Mucosa of descending colon (tissue), 3 donors: ENCODE measurements at regions of chr17 and their contacts with region 1.

Region 1: DNA sequence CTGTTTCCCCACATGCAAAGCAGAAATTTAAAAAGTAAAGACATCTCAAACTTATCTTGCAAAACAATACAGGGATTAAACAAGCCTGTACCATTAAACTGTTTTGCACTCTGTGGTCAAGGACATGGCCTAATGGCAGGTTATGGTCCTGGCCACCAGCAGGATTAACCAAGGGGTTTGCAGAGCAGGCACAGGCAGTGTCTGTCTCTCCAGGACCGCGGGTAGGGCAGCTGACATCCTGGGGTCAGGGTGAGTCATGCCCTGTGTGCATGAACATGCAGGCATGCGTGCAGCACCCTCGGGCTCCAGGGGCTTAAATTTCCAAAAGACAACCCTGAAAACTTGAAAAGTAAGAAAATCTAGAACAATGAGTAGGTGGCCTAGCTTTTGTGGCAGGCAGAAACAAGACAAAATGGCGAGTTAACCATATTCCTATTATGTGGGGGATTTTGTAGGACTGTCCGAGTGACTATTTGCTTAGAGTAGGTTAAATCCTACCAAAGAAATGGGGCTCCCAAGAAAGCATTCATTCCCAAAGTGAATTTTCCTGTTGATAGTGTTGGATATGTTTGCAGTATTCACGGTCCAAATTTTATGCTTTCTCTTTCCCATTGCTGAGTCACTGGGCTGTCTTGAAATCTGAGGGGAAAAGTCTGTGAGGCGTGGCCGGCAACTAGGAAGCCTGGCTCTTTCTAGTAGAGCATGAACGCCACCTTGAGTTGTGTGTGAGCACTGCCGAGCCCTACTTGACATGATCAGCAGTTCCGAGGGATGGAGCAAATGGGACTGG is 158.4 kb upstream of the FAM20A start:
- DNase-seq: peak; percentile 77 to 92 (median 80)
- ATAC-seq: peak; percentile 99
- H3K4me3 ChIP-seq: no peak overlapping the region
- H3K4me1 ChIP-seq: no peaks in the 10 kb centered on the region
- CTCF ChIP-seq: peak; percentile 64

Region 2: DNA sequence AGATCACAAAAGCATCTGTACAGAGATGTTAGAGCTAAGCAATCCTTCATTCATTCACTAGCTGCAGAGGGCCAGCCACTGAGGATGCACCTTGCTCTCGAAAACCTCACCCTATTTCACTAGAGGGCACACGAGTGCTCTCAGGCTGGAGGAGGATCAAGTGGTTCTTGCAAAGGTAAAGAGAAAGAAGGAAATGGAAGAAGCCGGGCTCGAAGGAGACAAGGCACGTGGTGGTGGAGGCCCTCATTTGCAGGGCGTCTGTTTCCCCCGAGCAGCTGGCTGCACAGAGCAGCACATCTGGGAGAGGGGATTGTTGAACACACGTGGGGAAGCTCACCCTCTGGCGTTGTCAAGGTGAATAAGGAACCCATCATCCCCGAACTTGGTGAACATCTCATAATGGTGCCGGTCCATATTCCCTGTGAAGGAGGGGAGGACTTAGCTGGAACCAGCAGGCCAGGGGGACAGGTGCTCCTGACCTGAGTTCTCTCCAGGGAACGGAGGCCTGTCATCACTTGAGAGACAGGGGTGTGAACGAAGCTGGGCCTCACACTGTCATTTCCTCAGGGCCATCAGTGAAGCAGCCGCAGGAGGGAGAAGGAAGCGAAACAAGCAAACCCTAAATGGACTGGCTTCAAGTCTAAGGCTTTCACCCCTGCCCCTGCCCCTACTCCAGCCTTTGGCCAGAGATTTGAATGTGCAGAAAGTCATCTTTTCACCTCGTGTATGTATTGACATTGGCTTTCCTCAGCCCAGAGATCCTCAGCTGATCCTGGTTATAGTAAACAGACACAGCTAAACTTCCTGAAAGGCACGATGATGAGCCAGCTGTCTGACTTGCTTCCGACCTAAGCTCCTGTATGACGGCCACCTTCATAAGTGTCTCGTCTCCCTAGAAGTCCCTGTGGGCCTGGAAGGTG is 219.7 kb before region 1 on chr17:
- intact Hi-C with region 1: loop called in 1 of 2 experiments (anchors 10 kb)
- DNase-seq: peak in 1 of 3 donors; percentile 27
- ATAC-seq: peak; percentile 59
- H3K4me3 ChIP-seq: no peak overlapping the region
- H3K4me1 ChIP-seq: no peaks in the 10 kb centered on the region
- CTCF ChIP-seq: no peak